IMR-90 (cell line): ENCODE measurements at regions of chr4 and their contacts with region 1.

Region 1: GRCh38 chr4:138299881-138300280 is 57.7 kb upstream of the SLC7A11 start:
- DNase-seq: no peak
- ATAC-seq: no peak
- H3K4me3 ChIP-seq: no peak overlapping the region
- H3K27ac ChIP-seq: no peak overlapping the region
- H3K4me1 ChIP-seq: no peaks in the 10 kb centered on the region
- H3K27me3 ChIP-seq: no peaks in the 10 kb centered on the region
- CTCF ChIP-seq: no peak
- POLR2A ChIP-seq: no peak
- RAD21 ChIP-seq: no peak

Region 2: DNA sequence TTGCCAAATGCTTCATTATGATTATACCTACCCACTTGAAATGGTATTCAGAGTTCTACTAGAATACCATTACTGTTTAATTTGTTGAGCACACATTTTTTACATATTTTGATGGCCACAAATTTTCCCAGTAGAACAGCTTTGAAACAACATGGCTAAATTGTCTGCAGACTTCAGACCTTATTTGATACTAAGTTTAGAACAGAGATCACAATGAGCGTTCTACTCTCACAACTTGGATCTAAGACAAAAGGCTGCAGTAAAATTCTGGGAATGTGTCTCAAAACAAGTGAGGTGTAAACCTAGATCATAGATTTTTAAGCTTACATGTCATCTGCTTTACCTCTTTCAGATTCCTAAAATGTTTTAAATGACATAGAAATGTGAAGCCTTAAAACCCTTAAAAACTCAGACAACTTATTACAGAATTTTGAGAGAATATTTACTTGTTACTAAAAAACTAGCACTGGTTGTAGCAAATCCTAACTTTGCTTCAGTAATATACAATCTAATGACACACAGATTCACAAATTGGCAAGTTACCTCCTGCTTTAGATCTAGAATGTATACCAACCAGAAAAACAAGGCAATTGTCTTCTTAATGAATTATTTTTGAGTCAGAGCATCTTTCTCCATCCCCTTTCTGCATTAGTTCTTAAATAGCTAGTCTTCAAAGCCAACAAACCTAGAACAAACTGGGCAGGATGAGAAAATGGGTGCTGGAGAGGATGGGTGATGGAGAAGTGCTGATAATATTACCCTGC is 301.0 kb before region 1 on chr4:
- CTCF ChIA-PET with region 1: no interaction called
- POLR2A ChIA-PET with region 1: no interaction called
- dilution Hi-C with region 1: no loop called
- in situ Hi-C with region 1: no loop called
- intact Hi-C with region 1: no loop called
- DNase-seq: peak; percentile 63
- ATAC-seq: peak; percentile 47
- H3K4me3 ChIP-seq: no peak overlapping the region
- H3K27ac ChIP-seq: no peak overlapping the region; the same call in 1 of the 2 replicates
- H3K4me1 ChIP-seq: peaks cover 8% of the 10 kb centered on the region; the same call in 1 of the 2 replicates
- H3K27me3 ChIP-seq: no peaks in the 10 kb centered on the region
- CTCF ChIP-seq: no peak
- POLR2A ChIP-seq: no peak
- RAD21 ChIP-seq: no peak

Region 3: DNA sequence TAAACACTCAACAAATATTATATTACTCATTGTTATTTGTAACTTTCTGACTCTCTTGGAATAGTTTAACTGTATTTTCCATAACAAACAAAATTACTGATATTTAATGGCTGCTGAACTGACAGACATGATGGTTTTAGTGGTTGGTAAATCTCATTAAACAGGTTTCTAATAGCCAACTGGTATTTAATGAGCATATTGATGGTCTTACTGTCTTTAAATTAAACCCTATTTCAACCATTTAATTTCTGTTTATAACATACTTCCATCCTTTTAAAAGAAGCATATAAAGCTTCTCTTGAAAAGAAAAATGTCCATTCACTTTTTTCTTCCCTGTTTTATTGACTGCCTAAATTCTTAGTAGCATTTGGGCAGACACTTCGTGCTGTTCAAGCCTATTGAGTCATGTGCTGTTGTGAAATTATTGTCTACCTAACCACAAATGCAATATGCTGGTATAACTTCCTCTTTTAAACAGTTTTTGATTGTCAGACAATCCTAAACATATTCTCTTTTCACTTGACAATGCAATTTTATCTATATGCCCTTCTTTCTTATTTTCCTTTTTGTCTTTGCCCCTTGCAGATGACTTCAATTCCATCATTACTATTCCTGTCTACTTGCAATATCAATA is 106.2 kb after region 1 on chr4:
- CTCF ChIA-PET with region 1: no interaction called
- POLR2A ChIA-PET with region 1: interaction called, 12 read pairs
- dilution Hi-C with region 1: no loop called
- in situ Hi-C with region 1: no loop called
- intact Hi-C with region 1: no loop called
- DNase-seq: peak; percentile 72
- ATAC-seq: peak; percentile 64
- H3K4me3 ChIP-seq: no peak overlapping the region
- H3K27ac ChIP-seq: no peak overlapping the region
- H3K4me1 ChIP-seq: peaks cover 11% of the 10 kb centered on the region
- H3K27me3 ChIP-seq: no peaks in the 10 kb centered on the region
- CTCF ChIP-seq: no peak
- POLR2A ChIP-seq: no peak
- RAD21 ChIP-seq: no peak